ENCODE measurements at regions of chr1 and their contacts with region 1.

Region 1: GRCh38 chr1:59718064-59718988 is 96.4 kb upstream of the HOOK1 start:
- DNase-seq: no peak
- H3K4me3 ChIP-seq: no peak overlapping the region
- H3K27ac ChIP-seq: no peak overlapping the region
- H3K4me1 ChIP-seq: peaks cover 0 to 6% (median 0%) of the 10 kb centered on the region in 4 experiments; a peak in 1 of 7 replicates
- H3K27me3 ChIP-seq: no peaks in the 10 kb centered on the region
- CTCF ChIP-seq: peak in 2 of 3 experiments; percentile 29 to 60; a peak in 2 of 4 replicates
- EP300 ChIP-seq: no peak
- POLR2A ChIP-seq: no peak
- RAD21 ChIP-seq: peak; percentile 61 to 66

Region 2: GRCh38 chr1:59707178-59707791 is 11.0 kb before region 1 on chr1:
- CTCF ChIA-PET with region 1: interaction called, 21 read pairs
- POLR2A ChIA-PET with region 1: no interaction called
- DNase-seq: no peak
- H3K4me3 ChIP-seq: no peak overlapping the region
- H3K27ac ChIP-seq: no peak overlapping the region
- H3K4me1 ChIP-seq: no peaks in the 10 kb centered on the region
- H3K27me3 ChIP-seq: no peaks in the 10 kb centered on the region
- CTCF ChIP-seq: no peak
- EP300 ChIP-seq: no peak
- POLR2A ChIP-seq: no peak
- RAD21 ChIP-seq: no peak

Measured in H1 (cell line).